Endothelial cell of umbilical vein (primary cell): ENCODE measurements at regions of chr6 and their contacts with region 1.

Region 1: GRCh38 chr6:34243131-34243771 is 5.6 kb downstream of the SMIM29 start:
- DNase-seq: peak; percentile 89
- H3K4me3 ChIP-seq: peak overlapping the region in 1 of 3 experiments; percentile 22
- H3K27ac ChIP-seq: peak overlapping the region; percentile 88
- H3K4me1 ChIP-seq: peaks cover 80% of the 10 kb centered on the region
- H3K27me3 ChIP-seq: no peaks in the 10 kb centered on the region
- CTCF ChIP-seq: no peak
- POLR2A ChIP-seq: no peak

Region 2: GRCh38 chr6:34207695-34208443 is 35.4 kb before region 1 on chr6:
- CTCF ChIA-PET with region 1: no interaction called
- POLR2A ChIA-PET with region 1: interaction called, 13 read pairs
- dilution Hi-C with region 1: no loop called
- intact Hi-C with region 1: no loop called
- DNase-seq: no peak
- H3K4me3 ChIP-seq: no peak overlapping the region
- H3K27ac ChIP-seq: no peak overlapping the region
- H3K4me1 ChIP-seq: no peaks in the 10 kb centered on the region
- H3K27me3 ChIP-seq: no peaks in the 10 kb centered on the region
- CTCF ChIP-seq: no peak
- POLR2A ChIP-seq: no peak